ENCODE measurements at regions of chr5 and their contacts with region 1.

Region 1: GRCh38 chr5:168734620-168735300 is 155.6 kb upstream of the PANK3 start:
- DNase-seq: no peak
- H3K4me3 ChIP-seq: no peak overlapping the region
- H3K27ac ChIP-seq: no peak overlapping the region
- H3K4me1 ChIP-seq: no peaks in the 10 kb centered on the region
- H3K27me3 ChIP-seq: peaks cover 45% of the 10 kb centered on the region
- CTCF ChIP-seq: no peak

Region 2: GRCh38 chr5:168770036-168770498 is 35.3 kb after region 1 on chr5:
- CTCF ChIA-PET with region 1: no interaction called
- POLR2A ChIA-PET with region 1: no interaction called
- intact Hi-C with region 1: no loop called
- DNase-seq: no peak
- H3K4me3 ChIP-seq: no peak overlapping the region
- H3K27ac ChIP-seq: no peak overlapping the region
- H3K4me1 ChIP-seq: no peaks in the 10 kb centered on the region
- H3K27me3 ChIP-seq: peaks cover 95% of the 10 kb centered on the region
- CTCF ChIP-seq: no peak

Region 3: DNA sequence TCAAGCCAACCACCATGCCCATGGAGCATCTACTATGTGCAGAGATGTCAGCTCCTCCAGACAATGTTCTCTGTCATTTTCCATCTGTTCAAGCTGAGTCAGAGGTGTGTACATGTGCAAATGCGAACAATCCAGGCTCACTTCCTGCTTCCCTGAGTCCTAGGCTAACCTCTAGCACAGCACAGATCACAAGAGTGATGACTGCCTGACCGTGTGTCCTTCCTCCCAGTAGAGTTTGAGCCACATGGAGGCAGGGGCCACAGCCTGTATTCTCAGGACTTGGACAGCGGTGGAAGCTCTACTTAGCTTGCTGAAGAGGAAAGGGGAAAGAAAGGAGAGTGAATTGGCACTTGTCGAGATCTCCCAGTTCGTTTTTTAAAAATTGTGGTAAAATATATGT is 1856.3 kb after region 1 on chr5:
- CTCF ChIA-PET with region 1: no interaction called
- POLR2A ChIA-PET with region 1: no interaction called
- intact Hi-C with region 1: loop called (anchors 5 kb)
- DNase-seq: no peak
- H3K4me3 ChIP-seq: no peak overlapping the region
- H3K27ac ChIP-seq: no peak overlapping the region
- H3K4me1 ChIP-seq: no peaks in the 10 kb centered on the region
- H3K27me3 ChIP-seq: no peaks in the 10 kb centered on the region
- CTCF ChIP-seq: no peak